PC-3 (cell line): ENCODE measurements at regions of chr2 and their contacts with region 1.

Region 1: DNA sequence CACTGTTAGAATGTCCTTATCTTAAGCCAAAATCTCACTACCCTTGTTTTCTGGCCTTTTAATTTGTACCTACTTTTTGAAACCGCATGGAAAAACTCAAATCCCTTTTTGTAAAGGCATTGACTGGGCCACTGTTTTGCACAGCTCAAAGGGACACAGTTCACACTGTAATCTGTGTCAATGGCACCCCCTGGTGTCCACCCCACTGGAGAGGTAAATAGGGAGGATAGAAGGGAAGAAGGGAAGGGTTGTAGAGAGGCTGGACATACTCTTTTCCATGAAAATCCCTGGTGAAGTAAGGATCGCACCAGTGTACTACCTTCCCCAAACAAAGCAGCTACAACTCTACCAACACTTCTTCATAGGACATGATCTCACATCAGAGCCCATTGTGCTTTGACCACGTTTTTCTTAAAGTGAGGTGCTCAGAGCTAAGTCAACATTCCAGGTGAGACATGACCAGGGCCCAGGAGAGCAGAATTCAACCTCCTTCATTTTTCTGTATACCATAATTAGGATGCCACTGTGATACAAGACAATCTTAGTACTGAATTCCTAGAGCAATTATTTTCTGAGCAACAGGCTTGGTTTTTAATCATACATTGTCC is 92.4 kb upstream of the RMDN2 start:
- DNase-seq: peak; percentile 94
- ATAC-seq: peak; percentile 99
- H3K4me3 ChIP-seq: no peak overlapping the region
- H3K27ac ChIP-seq: no peak overlapping the region
- H3K4me1 ChIP-seq: peaks cover 6% of the 10 kb centered on the region; the same call in 1 of the 2 replicates
- H3K27me3 ChIP-seq: no peaks in the 10 kb centered on the region
- CTCF ChIP-seq: peak; percentile 95

Region 2: DNA sequence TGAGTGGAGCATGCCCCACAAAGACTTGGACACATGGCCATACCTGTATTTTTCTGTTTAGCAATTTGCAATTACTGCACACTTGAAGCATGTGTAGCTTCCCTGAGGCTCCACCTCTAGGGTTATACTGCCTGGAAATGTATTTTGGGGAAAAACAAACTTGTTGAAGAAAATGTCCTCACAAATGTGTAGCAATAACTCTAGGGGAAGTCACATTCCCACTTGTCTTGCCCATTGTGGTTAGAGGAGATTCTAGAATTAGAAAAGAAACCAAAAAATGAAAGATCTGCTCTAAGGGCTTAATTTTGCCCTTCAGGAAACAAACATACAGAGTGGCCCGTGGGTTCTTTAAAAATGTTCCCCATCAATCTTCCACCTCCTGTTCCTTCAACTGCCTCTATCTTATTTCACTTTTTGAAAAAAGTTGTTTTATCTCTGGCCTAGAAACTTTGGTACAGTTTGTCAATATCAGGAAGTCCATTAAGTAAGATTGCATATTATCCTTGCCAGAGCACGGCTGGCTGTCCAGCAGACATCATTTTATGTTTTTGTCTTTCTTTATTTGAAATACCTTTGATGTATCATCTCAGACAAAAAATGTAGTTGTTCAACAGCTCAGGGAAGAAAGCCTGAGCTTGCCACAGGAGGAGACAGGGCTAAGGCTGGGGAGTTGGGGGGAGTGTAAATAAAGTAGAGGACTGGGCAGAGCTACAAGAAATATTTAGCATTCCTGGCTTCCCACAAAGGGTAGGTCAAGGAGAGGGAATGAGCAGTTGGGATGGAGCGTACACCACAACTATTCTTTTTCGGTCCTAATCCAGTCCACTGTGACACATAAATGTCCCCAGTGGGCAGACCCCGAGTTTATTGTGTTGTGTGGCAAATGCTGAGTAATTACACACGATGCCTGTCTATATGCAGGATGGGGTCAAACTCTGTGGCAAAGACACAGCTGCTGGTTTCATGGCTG is 64.5 kb before region 1 on chr2:
- CTCF ChIA-PET with region 1: no interaction called
- POLR2A ChIA-PET with region 1: no interaction called
- intact Hi-C with region 1: no loop called
- DNase-seq: peak; percentile 93
- ATAC-seq: peak; percentile 96
- H3K4me3 ChIP-seq: peak overlapping the region; percentile 13; the same call in 1 of the 2 replicates
- H3K27ac ChIP-seq: peak overlapping the region; percentile 12; the same call in 1 of the 2 replicates
- H3K4me1 ChIP-seq: peaks cover 51% of the 10 kb centered on the region
- H3K27me3 ChIP-seq: no peaks in the 10 kb centered on the region
- CTCF ChIP-seq: no peak

Region 3: GRCh38 chr2:37877457-37878315 is 45.0 kb after region 1 on chr2:
- CTCF ChIA-PET with region 1: interaction called, 13 read pairs
- POLR2A ChIA-PET with region 1: no interaction called
- intact Hi-C with region 1: loop called (anchors 2 kb)
- DNase-seq: peak; percentile 86
- ATAC-seq: peak; percentile 76
- H3K4me3 ChIP-seq: 0 out of 2 replicates have a peak overlapping the region, but pooled peaks have one; percentile 24
- H3K27ac ChIP-seq: no peak overlapping the region
- H3K4me1 ChIP-seq: no peaks in the 10 kb centered on the region
- H3K27me3 ChIP-seq: no peaks in the 10 kb centered on the region
- CTCF ChIP-seq: peak; percentile 86